CD8-positive, alpha-beta T cell (primary cell): ENCODE measurements at regions of chr5 and their contacts with region 1.

Region 1: GRCh38 chr5:146446853-146447733 is at the start of gene TCERG1:
- DNase-seq: peak; percentile 91 to 100 (median 96)
- ATAC-seq: peak; percentile 87
- H3K4me3 ChIP-seq: peak within 1 kb of the TSS; percentile 79 to 99
- H3K4me3 Mint-ChIP-seq: peak within 1 kb of the TSS; percentile 99
- H3K27ac ChIP-seq: peak within 1 kb of the TSS; percentile 85 to 97
- H3K27ac Mint-ChIP-seq: peak within 1 kb of the TSS; percentile 99
- H3K4me1 ChIP-seq: peaks cover 27% of the 10 kb centered on the region
- H3K4me1 Mint-ChIP-seq: peaks cover 43% of the 10 kb centered on the region
- H3K27me3 ChIP-seq: no peaks in the 10 kb centered on the region
- H3K27me3 Mint-ChIP-seq: no peaks in the 10 kb centered on the region
- CTCF ChIP-seq: peak; percentile 65
- total RNA-seq, gene TCERG1: 110 to 114 TPM

Region 2: DNA sequence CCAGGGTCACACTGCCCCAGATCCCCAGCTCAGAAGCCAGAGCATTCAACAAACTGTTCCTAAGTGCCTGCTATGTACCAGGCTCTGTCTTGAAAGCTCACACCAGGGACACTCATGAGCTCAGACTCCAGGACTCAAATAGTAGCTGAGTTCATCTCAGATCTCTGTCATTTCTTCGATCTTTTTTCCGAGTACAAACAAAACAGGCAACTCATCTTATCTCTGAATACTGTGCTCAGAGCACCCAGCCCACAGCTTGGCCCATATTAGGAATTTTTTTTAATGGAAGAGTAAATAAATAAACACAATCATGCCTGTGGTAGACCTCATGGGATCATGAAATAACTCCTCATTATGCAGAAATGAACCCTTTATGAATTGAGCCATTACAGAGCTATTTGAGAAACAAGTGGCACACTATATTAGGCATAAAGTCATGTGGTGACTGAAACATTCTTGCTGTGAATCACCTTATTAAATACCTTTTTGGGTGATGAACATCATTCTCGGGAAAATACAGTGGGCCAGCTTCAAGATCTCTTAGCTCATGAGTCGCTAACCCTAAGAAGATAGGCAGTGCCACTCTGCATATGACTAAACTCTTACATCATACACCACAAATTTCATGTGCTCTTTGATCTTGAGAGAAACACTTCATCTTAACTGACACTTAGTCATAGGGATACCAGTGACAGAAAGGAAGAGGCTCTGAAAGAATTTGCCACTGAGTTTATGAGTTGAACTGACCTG is 500.8 kb before region 1 on chr5:
- CTCF ChIA-PET with region 1: no interaction called
- POLR2A ChIA-PET with region 1: no interaction called
- intact Hi-C with region 1: no loop called
- DNase-seq: peak in 2 of 9 experiments; percentile 13 to 41
- ATAC-seq: no peak
- H3K4me3 ChIP-seq: no peak overlapping the region
- H3K4me3 Mint-ChIP-seq: no peak overlapping the region
- H3K27ac ChIP-seq: no peak overlapping the region
- H3K27ac Mint-ChIP-seq: no peak overlapping the region
- H3K4me1 ChIP-seq: no peaks in the 10 kb centered on the region
- H3K4me1 Mint-ChIP-seq: no peaks in the 10 kb centered on the region
- H3K27me3 ChIP-seq: peaks cover 0 to 2% of the 10 kb centered on the region in 2 experiments
- H3K27me3 Mint-ChIP-seq: no peaks in the 10 kb centered on the region
- CTCF ChIP-seq: no peak

Region 3: GRCh38 chr5:146188358-146188757 is 258.7 kb before region 1 on chr5:
- CTCF ChIA-PET with region 1: no interaction called
- POLR2A ChIA-PET with region 1: no interaction called
- intact Hi-C with region 1: loop called in 1 of 2 experiments (anchors 2 kb)
- DNase-seq: no peak
- ATAC-seq: no peak
- H3K4me3 ChIP-seq: no peak overlapping the region
- H3K4me3 Mint-ChIP-seq: no peak overlapping the region
- H3K27ac ChIP-seq: no peak overlapping the region
- H3K27ac Mint-ChIP-seq: no peak overlapping the region
- H3K4me1 ChIP-seq: no peaks in the 10 kb centered on the region
- H3K4me1 Mint-ChIP-seq: no peaks in the 10 kb centered on the region
- H3K27me3 ChIP-seq: peaks cover 0 to 6% of the 10 kb centered on the region in 2 experiments
- H3K27me3 Mint-ChIP-seq: peaks cover 13% of the 10 kb centered on the region
- CTCF ChIP-seq: no peak

Region 4: DNA sequence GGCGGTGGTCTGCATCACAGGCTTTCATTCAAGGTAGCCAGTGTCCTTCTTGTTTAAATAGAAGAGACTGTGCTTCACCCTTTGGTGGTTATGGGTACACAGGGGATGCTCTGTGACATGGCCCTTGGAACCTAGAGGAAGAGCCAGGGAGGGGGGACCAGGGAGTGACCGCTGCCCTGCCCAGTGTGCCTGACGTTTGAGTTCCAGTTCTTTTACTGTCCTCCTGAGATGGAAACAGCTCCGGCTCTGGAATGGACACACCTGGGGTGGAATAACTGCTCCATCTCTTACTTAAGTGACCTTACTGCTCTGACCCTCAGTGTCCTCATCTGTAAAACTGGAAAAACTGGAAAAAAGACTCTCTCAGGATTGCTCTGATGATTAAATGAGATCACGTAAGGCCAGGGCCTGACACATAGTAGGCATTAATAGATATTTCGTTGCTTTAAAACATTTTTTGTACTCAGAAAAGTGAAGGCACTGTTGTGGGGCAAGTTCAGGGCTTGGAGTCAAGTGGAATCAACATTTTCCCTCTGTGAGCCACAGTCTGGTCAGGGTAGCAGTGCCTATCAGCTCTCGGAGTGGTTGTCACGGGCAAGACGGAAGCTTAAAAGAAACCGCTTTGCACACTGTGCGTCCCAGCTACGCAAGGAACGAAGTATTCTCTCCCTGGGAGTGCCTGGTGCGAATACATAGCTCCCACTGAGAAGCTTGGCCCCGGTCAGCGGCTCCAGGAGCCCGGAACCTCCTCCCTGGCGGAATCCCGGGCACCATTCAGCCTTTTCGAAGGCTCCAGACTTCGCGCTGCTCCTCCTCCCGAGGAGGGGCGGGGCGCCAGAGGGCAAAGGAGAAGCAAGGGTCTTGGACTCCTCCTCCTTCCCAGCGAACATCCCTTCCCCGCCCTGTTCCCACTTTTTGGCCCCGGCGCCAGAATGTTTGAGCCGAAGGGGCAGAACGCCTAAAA is 102.7 kb before region 1 on chr5:
- CTCF ChIA-PET with region 1: no interaction called
- POLR2A ChIA-PET with region 1: no interaction called
- intact Hi-C with region 1: no loop called
- DNase-seq: no peak
- ATAC-seq: no peak
- H3K4me3 ChIP-seq: no peak overlapping the region
- H3K4me3 Mint-ChIP-seq: peak overlapping the region; percentile 47
- H3K27ac ChIP-seq: no peak overlapping the region
- H3K27ac Mint-ChIP-seq: no peak overlapping the region
- H3K4me1 ChIP-seq: peaks cover 6% of the 10 kb centered on the region
- H3K4me1 Mint-ChIP-seq: peaks cover 20% of the 10 kb centered on the region
- H3K27me3 ChIP-seq: peaks cover 9 to 22% of the 10 kb centered on the region in 2 experiments
- H3K27me3 Mint-ChIP-seq: peaks cover 65% of the 10 kb centered on the region
- CTCF ChIP-seq: no peak